Right ventricle myocardium inferior (tissue), 1 donor: ENCODE measurements at regions of chr10 and their contacts with region 1.

Region 1: DNA sequence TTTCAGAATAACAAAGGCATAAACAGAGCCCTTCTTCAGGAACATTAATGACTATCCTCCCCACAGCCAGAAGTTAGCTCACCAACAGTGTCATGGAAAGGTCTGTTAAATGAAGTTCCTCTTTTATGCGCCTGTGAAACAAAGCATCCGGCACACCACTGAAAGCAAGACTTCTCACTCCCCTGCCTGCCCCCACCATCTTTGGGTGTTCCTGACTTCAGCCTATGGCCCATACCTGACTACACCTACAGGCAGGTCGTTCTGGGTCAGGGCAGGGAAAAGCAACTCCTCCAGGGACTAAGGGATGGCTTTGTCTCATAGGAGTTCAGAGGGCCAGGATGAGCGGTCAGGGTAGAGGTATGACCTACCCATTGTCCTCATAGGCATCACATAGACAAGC is 205.4 kb downstream of the FANK1 start:
- DNase-seq: no peak
- ATAC-seq: no peak

Region 2: GRCh38 chr10:126062131-126062981 is 39.4 kb before region 1 on chr10:
- intact Hi-C with region 1: loop called (anchors 5 kb)
- DNase-seq: peak; percentile 93
- ATAC-seq: peak; percentile 95